ENCODE measurements at regions of chr13 and their contacts with region 1.

Region 1: GRCh38 chr13:80342471-80343380 is 1.8 kb upstream of the SPRY2 start:
- DNase-seq: peak; percentile 62
- H3K27ac ChIP-seq: peak overlapping the region; percentile 80
- CTCF ChIP-seq: peak; percentile 97

Region 2: GRCh38 chr13:80173224-80173623 is 169.5 kb before region 1 on chr13:
- CTCF ChIA-PET with region 1: no interaction called
- POLR2A ChIA-PET with region 1: no interaction called
- DNase-seq: no peak
- H3K27ac ChIP-seq: no peak overlapping the region
- CTCF ChIP-seq: no peak

Region 3: GRCh38 chr13:80386002-80386401 is 43.3 kb after region 1 on chr13:
- CTCF ChIA-PET with region 1: no interaction called
- POLR2A ChIA-PET with region 1: no interaction called
- DNase-seq: no peak
- H3K27ac ChIP-seq: no peak overlapping the region
- CTCF ChIP-seq: no peak

Region 4: GRCh38 chr13:81017513-81018152 is 674.9 kb after region 1 on chr13:
- CTCF ChIA-PET with region 1: interaction called, 14 read pairs
- POLR2A ChIA-PET with region 1: no interaction called
- DNase-seq: peak; percentile 26
- H3K27ac ChIP-seq: no peak overlapping the region
- CTCF ChIP-seq: peak; percentile 65

Measured in RWPE1 (cell line).